A673 (cell line): ENCODE measurements at regions of chr5 and their contacts with region 1.

Region 1: DNA sequence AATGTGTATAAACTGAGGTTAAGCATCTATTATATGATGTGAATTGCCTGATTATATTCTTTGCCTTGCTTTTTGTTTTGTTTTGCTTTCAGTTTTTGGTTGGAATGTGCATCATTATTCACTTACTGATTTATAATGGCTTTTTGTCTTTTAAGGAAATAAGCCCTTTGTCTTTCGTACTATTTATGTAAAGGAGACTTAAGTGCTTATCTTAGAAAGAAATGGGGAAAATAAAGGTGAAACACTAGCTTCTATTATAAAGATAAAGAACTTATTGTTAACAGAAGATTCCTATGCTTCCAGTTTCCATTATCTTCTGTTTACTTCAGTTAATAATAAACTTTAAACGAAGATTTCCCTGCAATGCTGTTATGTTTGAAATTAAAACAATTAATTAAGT is 23.3 kb downstream of the COX7C start:
- DNase-seq: no peak
- H3K4me3 ChIP-seq: no peak overlapping the region
- H3K27ac ChIP-seq: no peak overlapping the region
- H3K4me1 ChIP-seq: no peaks in the 10 kb centered on the region
- H3K27me3 ChIP-seq: no peaks in the 10 kb centered on the region
- CTCF ChIP-seq: no peak

Region 2: DNA sequence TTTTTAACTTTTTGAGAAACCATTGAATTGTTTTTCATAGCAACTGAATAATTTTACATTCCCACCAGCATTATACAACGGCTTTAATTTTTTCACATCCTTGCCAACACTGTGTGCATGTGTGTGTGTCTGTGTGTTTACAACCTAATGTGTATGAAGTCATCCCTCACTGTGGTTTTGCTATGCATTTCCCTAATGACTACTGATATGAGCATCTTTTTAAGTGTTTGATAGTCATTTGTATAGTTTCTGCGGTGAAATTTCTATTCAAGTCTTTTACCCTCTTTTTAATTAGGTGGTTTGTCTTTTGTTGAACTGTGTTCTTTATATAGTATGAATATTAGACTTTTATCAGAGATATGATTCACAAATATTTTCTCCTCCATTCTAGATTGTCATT is 286.3 kb before region 1 on chr5:
- CTCF ChIA-PET with region 1: interaction called, 20 read pairs
- POLR2A ChIA-PET with region 1: no interaction called
- intact Hi-C with region 1: no loop called
- DNase-seq: no peak
- H3K4me3 ChIP-seq: no peak overlapping the region
- H3K27ac ChIP-seq: no peak overlapping the region
- H3K4me1 ChIP-seq: no peaks in the 10 kb centered on the region
- H3K27me3 ChIP-seq: no peaks in the 10 kb centered on the region
- CTCF ChIP-seq: no peak